Ovary (tissue), 10 donors: ENCODE measurements at regions of chr2 and their contacts with region 1.

Region 1: GRCh38 chr2:85826990-85827878 is 61.6 kb downstream of the ST3GAL5 start:
- DNase-seq: peak; percentile 72 to 89 (median 83)
- H3K4me3 ChIP-seq: peak overlapping the region; percentile 21
- H3K27ac ChIP-seq: no peak overlapping the region
- H3K4me1 ChIP-seq: peaks cover 3% of the 10 kb centered on the region
- H3K27me3 ChIP-seq: no peaks in the 10 kb centered on the region
- CTCF ChIP-seq: peak; percentile 82 to 96 (median 95)
- EP300 ChIP-seq: no peak
- POLR2A ChIP-seq: peak; percentile 23

Region 2: DNA sequence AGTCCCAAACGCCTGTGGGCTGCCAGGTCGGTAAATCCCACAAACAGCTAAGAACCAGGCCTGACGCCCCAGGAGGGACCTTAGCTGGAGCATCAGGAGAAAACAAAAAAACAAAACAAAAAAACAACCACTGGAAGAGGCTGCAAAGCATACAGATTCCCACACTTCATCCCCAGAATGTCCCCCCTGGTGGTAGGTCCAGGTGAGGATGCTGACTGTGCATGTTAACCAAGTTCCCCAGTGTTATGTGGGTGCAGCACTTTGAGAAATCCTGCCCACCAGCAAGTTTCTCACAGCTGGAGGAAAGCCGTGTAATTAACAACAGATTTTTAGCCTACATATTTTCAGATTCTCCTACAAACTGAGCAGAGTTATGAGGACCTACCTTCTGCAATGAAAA is 46.4 kb after region 1 on chr2:
- intact Hi-C with region 1: no loop called
- DNase-seq: no peak
- H3K4me3 ChIP-seq: no peak overlapping the region
- H3K27ac ChIP-seq: no peak overlapping the region
- H3K4me1 ChIP-seq: peaks cover 5% of the 10 kb centered on the region
- H3K27me3 ChIP-seq: no peaks in the 10 kb centered on the region
- CTCF ChIP-seq: no peak
- EP300 ChIP-seq: no peak
- POLR2A ChIP-seq: no peak

Region 3: GRCh38 chr2:86079981-86080911 is 253.0 kb after region 1 on chr2:
- intact Hi-C with region 1: loop called (anchors 1 to 2 kb)
- DNase-seq: peak; percentile 79 to 88 (median 85)
- H3K4me3 ChIP-seq: no peak overlapping the region
- H3K27ac ChIP-seq: no peak overlapping the region
- H3K4me1 ChIP-seq: no peaks in the 10 kb centered on the region
- H3K27me3 ChIP-seq: no peaks in the 10 kb centered on the region
- CTCF ChIP-seq: peak; percentile 49 to 72 (median 71)
- EP300 ChIP-seq: no peak
- POLR2A ChIP-seq: no peak